ENCODE measurements at regions of chr6 and their contacts with region 1.

Region 1: GRCh38 chr6:75284632-75285286 is at the start of gene TMEM30A:
- DNase-seq: peak; percentile 87 to 97 (median 96)
- ATAC-seq: peak; percentile 99
- H3K4me3 ChIP-seq: peak within 1 kb of the TSS; percentile 85
- H3K4me3 Mint-ChIP-seq: no peak within 1 kb of the TSS
- H3K27ac ChIP-seq: peak within 1 kb of the TSS; percentile 88
- H3K27ac Mint-ChIP-seq: no peak within 1 kb of the TSS
- H3K4me1 ChIP-seq: peaks cover 21 to 24% of the 10 kb centered on the region in 2 donors
- H3K4me1 Mint-ChIP-seq: peaks cover 3 to 53% (median 44%) of the 10 kb centered on the region in 7 donors
- H3K27me3 ChIP-seq: no peaks in the 10 kb centered on the region
- H3K27me3 Mint-ChIP-seq: no peaks in the 10 kb centered on the region
- total RNA-seq, gene TMEM30A: 36.2 to 91.4 (median 61.1) TPM

Region 2: GRCh38 chr6:73451223-73452107 is 1833.3 kb before region 1 on chr6:
- CTCF ChIA-PET with region 1: no interaction called
- POLR2A ChIA-PET with region 1: no interaction called
- intact Hi-C with region 1: loop called in 1 of 2 experiments (anchors 5 kb)
- DNase-seq: peak; percentile 22 to 53 (median 38)
- ATAC-seq: peak; percentile 61
- H3K4me3 ChIP-seq: peak overlapping the region; percentile 73
- H3K4me3 Mint-ChIP-seq: peak overlapping the region; percentile 87 to 96 (median 90)
- H3K27ac ChIP-seq: peak overlapping the region; percentile 79
- H3K27ac Mint-ChIP-seq: peak overlapping the region; percentile 65 to 93 (median 79)
- H3K4me1 ChIP-seq: peaks cover 4 to 5% of the 10 kb centered on the region in 2 donors
- H3K4me1 Mint-ChIP-seq: peaks cover 17 to 35% (median 27%) of the 10 kb centered on the region in 7 donors
- H3K27me3 ChIP-seq: no peaks in the 10 kb centered on the region
- H3K27me3 Mint-ChIP-seq: no peaks in the 10 kb centered on the region

Region 3: GRCh38 chr6:73520688-73521350 is 1763.9 kb before region 1 on chr6 and contains the start of gene EEF1A1:
- CTCF ChIA-PET with region 1: no interaction called
- POLR2A ChIA-PET with region 1: interaction called, 3 read pairs
- intact Hi-C with region 1: loop called (anchors 1 to 2 kb)
- DNase-seq: peak; percentile 91 to 100 (median 99)
- ATAC-seq: peak; percentile 90
- H3K4me3 ChIP-seq: peak within 1 kb of the TSS; percentile 98
- H3K4me3 Mint-ChIP-seq: peak within 1 kb of the TSS; percentile 89 to 99 (median 94)
- H3K27ac ChIP-seq: peak within 1 kb of the TSS; percentile 98
- H3K27ac Mint-ChIP-seq: peak within 1 kb of the TSS; percentile 94 to 99 (median 97)
- H3K4me1 ChIP-seq: peaks cover 42 to 47% of the 10 kb centered on the region in 2 donors
- H3K4me1 Mint-ChIP-seq: peaks cover 16 to 72% (median 58%) of the 10 kb centered on the region in 7 donors
- H3K27me3 ChIP-seq: no peaks in the 10 kb centered on the region
- H3K27me3 Mint-ChIP-seq: peaks cover 0 to 10% (median 0%) of the 10 kb centered on the region in 5 donors
- total RNA-seq, gene EEF1A1: 8,219 to 15,585 (median 15,428) TPM

Region 4: GRCh38 chr6:75243333-75244062 is 41.3 kb before region 1 on chr6 and contains the start of gene COX7A2:
- CTCF ChIA-PET with region 1: interaction called, 4 read pairs
- POLR2A ChIA-PET with region 1: interaction called, 32 read pairs
- intact Hi-C with region 1: loop called (anchors 1 kb)
- DNase-seq: peak; percentile 66 to 91 (median 83)
- ATAC-seq: peak; percentile 98
- H3K4me3 ChIP-seq: peak within 1 kb of the TSS; percentile 84
- H3K4me3 Mint-ChIP-seq: peak within 1 kb of the TSS; percentile 88 to 99 (median 98)
- H3K27ac ChIP-seq: peak within 1 kb of the TSS; percentile 90
- H3K27ac Mint-ChIP-seq: peak within 1 kb of the TSS; percentile 94 to 100 (median 98)
- H3K4me1 ChIP-seq: peaks cover 10 to 11% of the 10 kb centered on the region in 2 donors
- H3K4me1 Mint-ChIP-seq: peaks cover 9 to 53% (median 33%) of the 10 kb centered on the region in 7 donors
- H3K27me3 ChIP-seq: no peaks in the 10 kb centered on the region
- H3K27me3 Mint-ChIP-seq: peaks cover 0 to 17% (median 15%) of the 10 kb centered on the region in 5 donors
- total RNA-seq, gene COX7A2: 159 to 395 (median 183) TPM

Region 5: GRCh38 chr6:75272145-75272840 is 12.5 kb before region 1 on chr6:
- CTCF ChIA-PET with region 1: interaction called, 9 read pairs
- POLR2A ChIA-PET with region 1: interaction called, 5 read pairs
- intact Hi-C with region 1: loop called (anchors 1 kb)
- DNase-seq: no peak
- ATAC-seq: no peak
- H3K4me3 ChIP-seq: no peak overlapping the region
- H3K4me3 Mint-ChIP-seq: peak overlapping the region in 3 of 10 donors; percentile 4 to 17 (median 16)
- H3K27ac ChIP-seq: no peak overlapping the region
- H3K27ac Mint-ChIP-seq: peak overlapping the region in 4 of 9 donors; percentile 15 to 57 (median 38)
- H3K4me1 ChIP-seq: peaks cover 12 to 16% of the 10 kb centered on the region in 2 donors
- H3K4me1 Mint-ChIP-seq: peaks cover 30 to 89% (median 85%) of the 10 kb centered on the region in 7 donors
- H3K27me3 ChIP-seq: no peaks in the 10 kb centered on the region
- H3K27me3 Mint-ChIP-seq: no peaks in the 10 kb centered on the region

Region 6: DNA sequence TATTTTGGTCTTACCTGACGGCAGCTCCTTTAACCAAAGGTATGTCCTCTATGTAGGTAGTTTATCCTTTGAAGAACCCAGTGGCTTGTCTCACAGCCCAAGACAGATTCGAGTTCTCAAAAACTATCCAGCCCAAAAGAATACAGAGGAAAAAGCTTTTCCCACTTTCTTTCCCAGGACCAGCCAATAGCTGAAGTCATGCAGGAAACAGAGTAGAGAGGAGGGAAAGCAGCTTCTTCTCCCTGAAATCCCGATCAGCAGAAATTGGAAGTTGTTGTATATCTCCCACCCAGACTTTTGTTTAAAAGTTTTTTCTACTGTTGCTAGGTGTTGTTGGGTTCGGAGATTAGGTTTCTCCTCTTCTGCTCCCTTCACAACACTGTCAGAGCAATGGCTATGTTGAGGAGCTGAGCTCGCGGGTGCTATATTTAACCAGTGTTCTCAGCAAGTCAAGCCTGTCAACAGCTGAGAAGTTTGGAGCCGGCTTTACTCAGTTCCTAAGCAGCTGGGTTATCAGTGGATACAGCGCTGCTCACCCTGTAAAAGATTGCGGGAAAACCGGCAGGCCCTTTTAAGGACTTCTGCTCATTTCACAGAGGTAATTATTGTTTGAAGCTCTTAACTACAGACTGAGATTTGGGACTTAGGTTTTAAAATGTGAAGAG is 208.8 kb after region 1 on chr6 and contains the start of gene FILIP1:
- CTCF ChIA-PET with region 1: no interaction called
- POLR2A ChIA-PET with region 1: no interaction called
- intact Hi-C with region 1: loop called in 1 of 2 experiments (anchors 1 kb)
- DNase-seq: no peak
- ATAC-seq: no peak
- H3K4me3 ChIP-seq: no peak within 1 kb of the TSS
- H3K4me3 Mint-ChIP-seq: no peak within 1 kb of the TSS
- H3K27ac ChIP-seq: no peak within 1 kb of the TSS
- H3K27ac Mint-ChIP-seq: no peak within 1 kb of the TSS
- H3K4me1 ChIP-seq: peaks cover 0 to 12% of the 10 kb centered on the region in 2 donors
- H3K4me1 Mint-ChIP-seq: peaks cover 0 to 14% (median 0%) of the 10 kb centered on the region in 7 donors
- H3K27me3 ChIP-seq: peaks cover 0 to 4% of the 10 kb centered on the region in 2 donors
- H3K27me3 Mint-ChIP-seq: peaks cover 42 to 73% (median 49%) of the 10 kb centered on the region in 5 donors
- total RNA-seq, gene FILIP1: 0.08 TPM in 1 of 5 experiments, not detected in the others

Region 7: DNA sequence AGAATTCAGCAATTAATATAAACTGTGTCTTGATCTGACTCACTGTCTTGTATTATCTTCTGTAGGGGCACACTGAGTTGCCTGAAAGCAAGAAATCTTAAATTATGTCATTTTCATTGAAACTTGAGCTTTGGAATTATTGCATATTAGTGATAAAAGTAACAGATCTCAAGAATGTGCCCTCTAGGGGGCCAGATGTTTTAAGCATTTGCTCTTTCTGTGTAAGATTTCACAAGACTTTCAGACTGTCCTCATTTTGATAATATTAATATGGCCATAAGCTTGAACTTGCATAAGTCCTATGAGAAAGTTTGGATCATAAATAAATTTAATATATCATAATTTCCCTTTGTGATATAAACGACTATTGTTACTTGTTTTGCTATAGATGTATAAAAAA is 408.8 kb after region 1 on chr6:
- CTCF ChIA-PET with region 1: no interaction called
- POLR2A ChIA-PET with region 1: no interaction called
- intact Hi-C with region 1: loop called in 1 of 2 experiments (anchors 10 kb)
- DNase-seq: no peak
- ATAC-seq: no peak
- H3K4me3 ChIP-seq: no peak overlapping the region
- H3K4me3 Mint-ChIP-seq: no peak overlapping the region
- H3K27ac ChIP-seq: no peak overlapping the region
- H3K27ac Mint-ChIP-seq: peak overlapping the region in 1 of 9 donors; percentile 12
- H3K4me1 ChIP-seq: no peaks in the 10 kb centered on the region
- H3K4me1 Mint-ChIP-seq: peaks cover 0 to 2% (median 0%) of the 10 kb centered on the region in 7 donors
- H3K27me3 ChIP-seq: no peaks in the 10 kb centered on the region
- H3K27me3 Mint-ChIP-seq: no peaks in the 10 kb centered on the region

Measured in naive thymus-derived CD4-positive, alpha-beta T cell (primary cell).